Tibial artery (tissue), 4 donors: ENCODE measurements at regions of chr15 and their contacts with region 1.

Region 1: GRCh38 chr15:57866149-57866736 is 159.7 kb downstream of the POLR2M start:
- DNase-seq: peak in 1 of 2 donors; percentile 55
- H3K4me3 ChIP-seq: no peak overlapping the region
- H3K27ac ChIP-seq: no peak overlapping the region
- H3K4me1 ChIP-seq: no peaks in the 10 kb centered on the region
- H3K27me3 ChIP-seq: peaks cover 0 to 9% of the 10 kb centered on the region in 2 donors
- CTCF ChIP-seq: peak; percentile 48 to 60

Region 2: DNA sequence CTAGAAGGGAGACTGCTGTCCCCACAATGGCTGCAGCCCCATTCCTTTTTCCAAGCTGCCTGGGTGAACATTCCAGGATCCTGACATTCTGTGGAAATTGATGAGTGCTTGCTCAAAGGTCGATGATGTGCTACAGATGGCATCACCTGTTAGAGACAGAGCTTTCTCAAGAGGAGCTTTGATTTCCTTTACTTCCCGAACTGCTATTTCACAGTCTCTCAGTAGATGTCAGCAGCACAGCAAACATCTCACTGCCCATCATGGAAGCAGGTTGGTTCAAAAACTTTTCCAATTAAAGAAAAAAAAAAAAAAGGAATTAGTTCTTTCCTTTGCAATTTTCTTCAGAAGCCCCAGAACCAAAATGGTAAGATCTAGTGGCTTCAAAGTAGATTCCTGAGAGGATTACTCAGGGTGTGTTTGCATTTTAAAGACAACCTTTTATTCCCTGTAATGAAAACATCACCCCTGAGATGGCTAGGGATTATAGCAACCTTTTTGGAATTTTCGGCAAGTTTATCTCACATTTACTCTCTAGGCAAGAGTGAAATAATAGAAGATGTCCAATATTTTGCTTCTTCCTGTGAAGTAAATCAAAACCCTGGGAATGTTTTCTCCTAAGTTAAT is 115.0 kb before region 1 on chr15:
- intact Hi-C with region 1: loop called (anchors 10 kb)
- DNase-seq: no peak
- H3K4me3 ChIP-seq: no peak overlapping the region
- H3K27ac ChIP-seq: no peak overlapping the region
- H3K4me1 ChIP-seq: peaks cover 0 to 11% (median 4%) of the 10 kb centered on the region in 4 donors
- H3K27me3 ChIP-seq: no peaks in the 10 kb centered on the region
- CTCF ChIP-seq: peak; percentile 37 to 39

Region 3: DNA sequence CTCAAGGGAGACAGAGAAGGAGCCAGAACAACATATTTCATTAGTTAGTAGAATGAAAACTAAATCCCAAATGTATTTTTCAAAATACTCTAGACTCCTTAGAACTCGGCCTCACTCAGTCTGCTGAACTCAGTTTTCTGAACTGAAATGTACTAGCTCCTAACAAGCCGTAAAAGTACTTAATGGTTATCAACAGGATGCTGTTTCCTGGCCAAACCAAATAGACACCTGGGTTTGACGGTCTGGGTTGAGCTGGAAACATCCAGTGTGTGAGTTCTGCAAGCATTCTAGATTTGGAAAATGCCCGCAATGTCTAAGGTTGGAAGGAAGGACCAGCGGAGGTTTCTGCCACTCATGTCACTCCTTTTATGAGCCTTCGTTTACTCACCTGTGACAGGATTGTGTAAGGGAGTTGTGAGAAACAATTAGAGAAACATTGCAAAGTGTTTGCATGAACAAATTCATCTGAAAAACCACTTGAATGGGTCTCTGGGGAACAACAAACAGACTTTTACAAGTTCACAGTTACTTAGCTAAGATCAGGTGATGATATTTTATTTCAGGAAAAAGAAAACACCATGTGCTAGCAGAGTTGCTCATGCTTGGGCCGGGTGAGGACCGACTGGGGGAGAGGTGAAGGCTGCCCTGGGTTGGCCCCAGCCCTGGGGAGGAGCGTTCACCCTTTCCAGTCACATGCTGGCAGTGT is 48.3 kb after region 1 on chr15:
- intact Hi-C with region 1: no loop called
- DNase-seq: no peak
- H3K4me3 ChIP-seq: no peak overlapping the region
- H3K27ac ChIP-seq: no peak overlapping the region
- H3K4me1 ChIP-seq: no peaks in the 10 kb centered on the region
- H3K27me3 ChIP-seq: no peaks in the 10 kb centered on the region
- CTCF ChIP-seq: no peak

Region 4: GRCh38 chr15:58066042-58066867 is 200.0 kb after region 1 on chr15:
- intact Hi-C with region 1: loop called (anchors 5 kb)
- DNase-seq: peak; percentile 30 to 69
- H3K4me3 ChIP-seq: peak overlapping the region; percentile 39 to 56
- H3K27ac ChIP-seq: no peak overlapping the region
- H3K4me1 ChIP-seq: peaks cover 0 to 18% (median 14%) of the 10 kb centered on the region in 4 donors
- H3K27me3 ChIP-seq: peaks cover 4 to 38% of the 10 kb centered on the region in 2 donors
- CTCF ChIP-seq: peak; percentile 70 to 82